ENCODE measurements at regions of chr14 and their contacts with region 1.

Region 1: DNA sequence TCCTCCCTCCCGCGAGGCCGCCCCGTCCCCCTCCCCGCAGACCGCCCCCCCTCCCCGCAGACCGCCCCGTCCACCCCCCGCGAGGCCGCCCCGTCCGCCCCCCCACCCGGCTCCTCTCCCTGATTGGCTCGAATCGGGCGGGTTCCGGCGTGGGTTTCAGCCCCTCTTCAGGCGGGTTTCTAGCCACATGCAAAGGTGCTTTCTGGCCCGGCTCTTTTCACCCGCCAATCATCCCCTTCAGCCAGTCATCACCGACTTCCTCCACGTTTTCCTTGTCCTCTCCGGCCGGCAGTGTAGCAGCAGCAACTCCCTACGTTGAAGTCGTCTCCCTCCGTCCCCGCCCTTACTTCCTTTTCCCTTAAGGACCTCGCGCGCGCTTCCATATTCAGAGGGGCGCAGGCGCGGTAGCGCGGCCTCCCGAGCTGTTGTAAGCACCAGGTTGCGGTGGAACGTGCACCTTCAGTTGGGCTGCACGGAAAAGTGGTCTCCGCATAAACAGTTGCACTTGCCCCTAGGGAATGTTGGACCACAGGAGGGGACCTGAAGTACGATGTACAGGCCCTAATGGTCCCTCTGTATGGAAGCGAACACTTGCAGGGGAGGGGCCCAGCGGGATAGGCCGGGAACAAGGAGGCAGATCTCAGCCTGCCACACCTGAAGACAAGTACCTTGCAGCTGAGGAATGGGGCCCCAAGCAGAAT is 44.6 kb upstream of the ESR2 start:
- DNase-seq: peak; percentile 98
- ATAC-seq: peak; percentile 92
- H3K4me3 ChIP-seq: peak overlapping the region; percentile 68
- H3K27ac ChIP-seq: peak overlapping the region; percentile 78
- H3K4me1 ChIP-seq: no peaks in the 10 kb centered on the region
- H3K27me3 ChIP-seq: no peaks in the 10 kb centered on the region
- CTCF ChIP-seq: no peak
- POLR2A ChIP-seq: no peak; the same call in 1 of the 2 replicates
- RAD21 ChIP-seq: no peak

Region 2: GRCh38 chr14:64387694-64388532 is 49.1 kb after region 1 on chr14 and contains the start of gene MTHFD1:
- CTCF ChIA-PET with region 1: no interaction called
- POLR2A ChIA-PET with region 1: no interaction called
- dilution Hi-C with region 1: no loop called
- in situ Hi-C with region 1: no loop called
- intact Hi-C with region 1: loop called (anchors 1 kb)
- DNase-seq: peak; percentile 99
- ATAC-seq: peak; percentile 94
- H3K4me3 ChIP-seq: peak within 1 kb of the TSS; percentile 63
- H3K27ac ChIP-seq: peak within 1 kb of the TSS; percentile 75
- H3K4me1 ChIP-seq: no peaks in the 10 kb centered on the region
- H3K27me3 ChIP-seq: no peaks in the 10 kb centered on the region
- CTCF ChIP-seq: no peak
- POLR2A ChIP-seq: peak; percentile 77
- RAD21 ChIP-seq: no peak
- total RNA-seq, gene MTHFD1: 59.7 and 64.9 TPM in 2 replicates

Region 3: GRCh38 chr14:64478634-64479250 is 140.0 kb after region 1 on chr14:
- CTCF ChIA-PET with region 1: interaction called, 17 read pairs
- POLR2A ChIA-PET with region 1: no interaction called
- dilution Hi-C with region 1: no loop called
- in situ Hi-C with region 1: loop called (anchors 5 kb)
- intact Hi-C with region 1: no loop called
- DNase-seq: peak; percentile 37
- ATAC-seq: peak; percentile 56
- H3K4me3 ChIP-seq: no peak overlapping the region
- H3K27ac ChIP-seq: no peak overlapping the region
- H3K4me1 ChIP-seq: no peaks in the 10 kb centered on the region
- H3K27me3 ChIP-seq: no peaks in the 10 kb centered on the region
- CTCF ChIP-seq: peak; percentile 60
- POLR2A ChIP-seq: no peak
- RAD21 ChIP-seq: peak; percentile 62

Region 4: DNA sequence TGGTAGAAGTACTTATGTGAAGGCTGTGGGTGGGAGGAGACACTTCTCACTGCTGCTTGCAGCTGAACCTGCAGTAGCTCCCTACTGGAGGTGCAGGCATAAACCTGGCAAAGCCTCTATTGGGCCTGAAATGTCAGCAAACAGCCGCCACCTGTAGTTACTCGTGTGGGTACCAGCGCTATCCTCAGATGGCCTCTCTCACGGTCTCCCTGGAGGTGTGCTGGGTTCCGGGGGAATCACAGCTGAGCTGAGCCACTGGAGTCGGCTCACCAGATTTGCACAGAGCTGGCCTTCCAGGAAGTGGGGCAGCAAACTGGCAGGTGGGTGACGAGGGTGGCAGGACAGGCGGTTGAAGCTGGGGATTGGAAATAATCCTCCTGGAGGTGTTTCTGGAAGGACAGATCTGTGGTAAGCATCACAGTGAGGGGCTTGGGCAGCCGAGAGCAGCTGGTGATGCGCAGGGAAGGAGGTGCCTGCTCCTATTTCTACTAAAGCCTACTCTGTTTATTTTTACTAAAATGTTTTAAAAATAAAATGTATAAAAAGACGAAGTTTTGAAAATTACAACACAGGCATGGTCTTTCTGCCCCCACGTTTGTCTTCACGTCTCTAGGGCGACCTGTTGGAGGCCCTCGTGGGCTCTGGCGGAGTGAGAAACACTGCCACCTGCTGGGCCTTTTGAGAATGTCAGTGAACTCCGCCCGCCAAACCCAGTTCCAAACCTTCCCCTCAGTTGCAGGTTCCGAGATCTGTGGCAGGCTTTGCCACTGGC is 297.6 kb after region 1 on chr14:
- CTCF ChIA-PET with region 1: no interaction called
- POLR2A ChIA-PET with region 1: no interaction called
- dilution Hi-C with region 1: no loop called
- in situ Hi-C with region 1: loop called (anchors 10 kb)
- intact Hi-C with region 1: loop called (anchors 5 kb)
- DNase-seq: peak; percentile 67
- ATAC-seq: peak; percentile 89
- H3K4me3 ChIP-seq: no peak overlapping the region
- H3K27ac ChIP-seq: peak overlapping the region; percentile 48
- H3K4me1 ChIP-seq: peaks cover 12% of the 10 kb centered on the region
- H3K27me3 ChIP-seq: no peaks in the 10 kb centered on the region
- CTCF ChIP-seq: peak; percentile 86
- POLR2A ChIP-seq: no peak
- RAD21 ChIP-seq: peak; percentile 84

Region 5: DNA sequence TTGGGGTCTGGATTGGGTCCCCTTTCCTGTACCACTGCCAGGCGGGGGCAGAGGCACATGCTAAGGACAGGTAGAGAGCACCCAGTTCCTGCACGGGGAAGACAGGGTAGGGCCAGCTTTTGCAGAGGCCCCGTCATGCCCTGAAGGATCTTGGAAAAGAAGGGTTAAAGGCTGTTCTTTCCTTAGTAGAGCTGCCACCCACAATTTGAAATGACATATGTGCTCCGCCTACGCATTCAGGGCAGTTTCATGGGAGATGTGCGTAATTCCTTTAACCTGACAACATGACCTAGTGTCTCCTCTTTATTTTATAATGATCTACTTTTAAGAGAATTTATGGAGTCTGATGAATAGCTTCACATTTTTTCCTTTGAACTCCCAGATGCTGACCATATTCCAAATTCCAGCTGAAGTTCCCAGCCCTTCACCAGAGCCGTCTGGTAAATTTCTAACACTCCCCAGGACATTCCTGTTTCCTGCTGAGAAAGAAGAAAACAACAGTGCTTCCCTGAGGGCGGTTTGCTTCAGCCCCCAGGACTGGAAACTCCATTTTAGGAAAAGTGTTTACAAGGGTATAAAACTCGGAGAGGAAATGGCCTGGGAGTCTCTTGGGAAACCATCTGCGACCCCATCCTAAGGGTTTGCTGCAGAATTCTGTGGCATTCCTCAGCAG is 306.6 kb after region 1 on chr14:
- CTCF ChIA-PET with region 1: no interaction called
- POLR2A ChIA-PET with region 1: no interaction called
- dilution Hi-C with region 1: no loop called
- in situ Hi-C with region 1: loop called (anchors 10 kb)
- intact Hi-C with region 1: no loop called
- DNase-seq: peak; percentile 97
- ATAC-seq: peak; percentile 91
- H3K4me3 ChIP-seq: no peak overlapping the region
- H3K27ac ChIP-seq: peak overlapping the region; percentile 96
- H3K4me1 ChIP-seq: peaks cover 15% of the 10 kb centered on the region
- H3K27me3 ChIP-seq: no peaks in the 10 kb centered on the region
- CTCF ChIP-seq: no peak
- POLR2A ChIP-seq: no peak
- RAD21 ChIP-seq: no peak

Measured in IMR-90 (cell line).